A673 (cell line): ENCODE measurements at regions of chr2 and their contacts with region 1.

Region 1: GRCh38 chr2:2466534-2466933 is 135.5 kb upstream of the MYT1L start:
- DNase-seq: no peak
- H3K4me3 ChIP-seq: no peak overlapping the region
- H3K27ac ChIP-seq: no peak overlapping the region
- H3K4me1 ChIP-seq: no peaks in the 10 kb centered on the region
- H3K27me3 ChIP-seq: peaks cover 25% of the 10 kb centered on the region
- CTCF ChIP-seq: no peak

Region 2: GRCh38 chr2:2743164-2743571 is 276.6 kb after region 1 on chr2:
- CTCF ChIA-PET with region 1: no interaction called
- POLR2A ChIA-PET with region 1: no interaction called
- intact Hi-C with region 1: no loop called
- DNase-seq: peak; percentile 17
- H3K4me3 ChIP-seq: no peak overlapping the region
- H3K27ac ChIP-seq: no peak overlapping the region
- H3K4me1 ChIP-seq: no peaks in the 10 kb centered on the region
- H3K27me3 ChIP-seq: no peaks in the 10 kb centered on the region
- CTCF ChIP-seq: no peak

Region 3: DNA sequence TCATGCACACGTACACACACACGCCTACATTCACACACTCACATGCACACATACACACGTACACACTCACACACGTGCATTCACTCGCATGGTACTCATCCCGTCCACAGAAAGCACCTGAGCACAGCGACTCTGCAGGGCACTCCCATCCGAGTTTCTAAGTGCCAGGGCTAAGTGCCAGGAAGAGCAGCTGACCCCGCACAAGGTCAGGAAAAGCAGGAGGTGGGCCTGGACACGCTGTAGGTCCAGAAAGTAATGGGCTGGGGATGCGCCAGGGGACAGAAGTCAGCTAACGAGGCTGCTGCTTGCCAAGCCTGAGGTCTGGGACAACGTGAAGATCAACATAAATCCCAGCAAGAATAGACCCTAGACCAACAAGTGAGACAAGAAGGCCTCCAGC is 1036.9 kb after region 1 on chr2:
- CTCF ChIA-PET with region 1: interaction called, 12 read pairs
- POLR2A ChIA-PET with region 1: no interaction called
- intact Hi-C with region 1: no loop called
- DNase-seq: no peak
- H3K4me3 ChIP-seq: no peak overlapping the region
- H3K27ac ChIP-seq: no peak overlapping the region
- H3K4me1 ChIP-seq: no peaks in the 10 kb centered on the region
- H3K27me3 ChIP-seq: no peaks in the 10 kb centered on the region
- CTCF ChIP-seq: no peak